ENCODE measurements at regions of chr3 and their contacts with region 1.

Region 1: DNA sequence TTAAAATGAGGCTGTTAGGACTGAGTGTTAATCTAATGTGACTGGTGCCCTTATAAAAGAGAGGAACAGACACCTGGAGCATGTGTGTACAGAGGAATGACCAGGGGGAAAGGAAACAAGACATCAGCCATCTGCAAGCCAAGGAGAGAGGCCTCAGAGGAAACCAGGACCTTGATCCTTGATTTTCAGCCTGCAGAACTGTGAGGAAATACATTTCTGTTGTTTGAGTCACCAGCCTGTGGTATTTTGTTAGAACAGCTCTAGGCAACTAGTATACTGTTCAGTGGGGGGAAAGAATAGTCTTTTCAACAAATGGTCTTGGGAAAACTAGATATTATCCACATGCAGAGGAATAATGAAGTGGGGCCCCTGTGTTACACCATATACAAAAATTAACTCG is 80.6 kb downstream of the CCR1 start:
- DNase-seq: peak; percentile 77
- H3K4me3 ChIP-seq: no peak overlapping the region
- H3K27ac ChIP-seq: peak overlapping the region; percentile 62
- H3K4me1 ChIP-seq: peaks cover 13% of the 10 kb centered on the region
- H3K27me3 ChIP-seq: no peaks in the 10 kb centered on the region
- CTCF ChIP-seq: no peak

Region 2: DNA sequence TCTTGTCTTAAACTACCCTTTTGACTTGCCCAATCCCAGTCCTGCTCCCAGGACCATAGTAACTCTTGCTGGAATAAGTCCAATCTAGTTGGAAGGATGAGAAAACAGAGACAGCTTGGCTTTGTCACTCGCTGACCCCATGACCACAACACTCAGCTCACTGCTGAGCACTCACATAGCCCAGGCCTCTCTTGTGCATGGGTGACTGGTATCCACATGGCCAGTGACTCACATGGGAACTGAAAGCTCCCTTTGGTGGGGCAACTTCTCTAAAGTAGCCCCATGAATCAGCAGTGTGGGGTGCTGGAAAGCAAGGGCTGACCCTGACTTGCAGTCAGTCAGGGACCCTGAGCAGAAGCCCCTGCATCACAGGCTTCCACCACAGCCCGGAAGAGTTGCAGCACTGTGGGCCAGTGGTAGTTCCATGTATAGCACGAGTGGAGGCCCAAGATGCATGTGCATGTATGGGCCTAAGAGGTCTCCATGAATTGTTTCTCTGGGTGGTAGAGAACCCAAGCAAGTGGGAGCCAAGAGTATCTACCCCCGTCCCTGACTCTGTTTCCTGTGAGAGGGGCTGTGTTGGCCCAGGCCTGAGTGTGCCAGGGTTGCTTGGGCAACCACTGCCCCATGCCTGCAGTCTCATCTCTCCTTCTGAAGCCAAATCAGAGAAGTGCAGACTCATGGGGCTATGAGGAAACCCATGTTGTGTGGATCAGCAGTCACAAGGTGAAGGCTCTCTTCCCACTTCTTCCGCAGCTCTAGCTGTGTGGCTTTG is 38.1 kb before region 1 on chr3:
- CTCF ChIA-PET with region 1: no interaction called
- dilution Hi-C with region 1: loop called (anchors 5 kb)
- in situ Hi-C with region 1: no loop called
- intact Hi-C with region 1: loop called (anchors 1 kb)
- DNase-seq: peak; percentile 97
- H3K4me3 ChIP-seq: no peak overlapping the region
- H3K27ac ChIP-seq: peak overlapping the region; percentile 70
- H3K4me1 ChIP-seq: peaks cover 27% of the 10 kb centered on the region
- H3K27me3 ChIP-seq: no peaks in the 10 kb centered on the region
- CTCF ChIP-seq: no peak

Region 3: DNA sequence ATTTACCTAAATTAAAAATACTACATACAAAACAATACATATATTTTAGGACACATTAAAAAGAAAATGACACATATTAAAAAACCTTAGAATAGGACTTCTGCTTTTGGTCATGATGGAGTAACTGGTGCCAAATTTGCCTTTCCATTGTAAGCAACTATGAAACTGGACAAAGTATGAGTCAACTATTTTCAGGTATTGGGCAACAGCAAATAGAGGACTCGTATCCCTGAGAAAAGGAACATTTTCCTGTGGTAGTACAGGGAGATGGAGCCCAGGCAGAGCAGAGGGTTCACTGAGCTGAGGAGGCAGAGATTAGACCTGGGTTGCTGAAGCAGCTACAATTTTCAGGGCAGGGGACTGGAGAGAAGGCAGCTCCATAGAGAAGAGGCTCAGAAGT is 65.9 kb after region 1 on chr3:
- CTCF ChIA-PET with region 1: no interaction called
- dilution Hi-C with region 1: loop called (anchors 5 kb)
- in situ Hi-C with region 1: no loop called
- intact Hi-C with region 1: no loop called
- DNase-seq: peak; percentile 73
- H3K4me3 ChIP-seq: no peak overlapping the region
- H3K27ac ChIP-seq: no peak overlapping the region
- H3K4me1 ChIP-seq: peaks cover 6% of the 10 kb centered on the region
- H3K27me3 ChIP-seq: no peaks in the 10 kb centered on the region
- CTCF ChIP-seq: no peak

Region 4: GRCh38 chr3:46242120-46242519 is 114.6 kb after region 1 on chr3 and contains the start of gene CCR3:
- CTCF ChIA-PET with region 1: no interaction called
- dilution Hi-C with region 1: no loop called
- in situ Hi-C with region 1: no loop called
- intact Hi-C with region 1: no loop called
- DNase-seq: no peak
- H3K4me3 ChIP-seq: no peak within 1 kb of the TSS
- H3K27ac ChIP-seq: no peak within 1 kb of the TSS
- H3K4me1 ChIP-seq: peaks cover 9% of the 10 kb centered on the region
- H3K27me3 ChIP-seq: no peaks in the 10 kb centered on the region
- CTCF ChIP-seq: no peak
- total RNA-seq, gene CCR3: 0.19 TPM in 1 of 2 donors, not detected in the other